Prostate gland (tissue), 2 donors: ENCODE measurements at regions of chr18 and their contacts with region 1.

Region 1: GRCh38 chr18:13268158-13269012 is 49.8 kb downstream of the LDLRAD4 start:
- DNase-seq: peak; percentile 55
- H3K4me3 ChIP-seq: no peak overlapping the region
- H3K27ac ChIP-seq: peak overlapping the region; percentile 40 to 51
- H3K4me1 ChIP-seq: peaks cover 23% of the 10 kb centered on the region
- H3K27me3 ChIP-seq: no peaks in the 10 kb centered on the region
- CTCF ChIP-seq: no peak
- POLR2A ChIP-seq: no peak

Region 2: GRCh38 chr18:12990967-12991838 is 277.2 kb before region 1 on chr18 and contains the start of gene CEP192:
- intact Hi-C with region 1: loop called (anchors 10 kb)
- DNase-seq: peak; percentile 98
- H3K4me3 ChIP-seq: peak within 1 kb of the TSS; percentile 87 to 89
- H3K27ac ChIP-seq: peak within 1 kb of the TSS; percentile 85 to 86
- H3K4me1 ChIP-seq: peaks cover 4% of the 10 kb centered on the region
- H3K27me3 ChIP-seq: no peaks in the 10 kb centered on the region
- CTCF ChIP-seq: peak in 2 of 4 experiments; percentile 15 to 39
- POLR2A ChIP-seq: peak; percentile 79
- total RNA-seq, gene CEP192: 17.2 to 37.3 TPM

Region 3: DNA sequence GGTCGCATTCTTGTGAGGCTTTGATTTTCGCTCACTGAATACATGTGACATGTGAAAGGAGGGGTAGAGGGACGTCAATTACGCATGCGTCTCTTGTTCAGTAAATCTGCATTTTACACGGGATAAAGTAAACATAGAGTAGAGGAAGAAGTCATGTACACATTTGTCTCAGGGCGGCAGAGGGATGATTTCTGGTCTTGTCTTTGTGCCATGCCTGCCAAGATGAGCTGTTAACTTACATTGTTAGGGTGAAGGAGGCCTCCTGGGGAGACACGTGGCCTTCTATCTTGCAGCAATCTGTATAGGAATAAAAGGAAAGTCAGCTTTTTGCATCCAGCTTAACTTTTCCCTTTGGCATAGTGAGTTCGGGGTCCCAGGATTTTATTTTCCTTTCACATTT is 56.5 kb after region 1 on chr18:
- intact Hi-C with region 1: no loop called
- DNase-seq: no peak
- H3K4me3 ChIP-seq: no peak overlapping the region
- H3K27ac ChIP-seq: no peak overlapping the region
- H3K4me1 ChIP-seq: no peaks in the 10 kb centered on the region
- H3K27me3 ChIP-seq: no peaks in the 10 kb centered on the region
- CTCF ChIP-seq: no peak
- POLR2A ChIP-seq: no peak

Region 4: GRCh38 chr18:13381944-13382365 is 113.6 kb after region 1 on chr18:
- intact Hi-C with region 1: loop called (anchors 10 kb)
- DNase-seq: peak; percentile 55
- H3K4me3 ChIP-seq: peak overlapping the region in 1 of 2 donors; percentile 24
- H3K27ac ChIP-seq: peak overlapping the region; percentile 47 to 74
- H3K4me1 ChIP-seq: peaks cover 12% of the 10 kb centered on the region
- H3K27me3 ChIP-seq: no peaks in the 10 kb centered on the region
- CTCF ChIP-seq: no peak
- POLR2A ChIP-seq: no peak

Region 5: DNA sequence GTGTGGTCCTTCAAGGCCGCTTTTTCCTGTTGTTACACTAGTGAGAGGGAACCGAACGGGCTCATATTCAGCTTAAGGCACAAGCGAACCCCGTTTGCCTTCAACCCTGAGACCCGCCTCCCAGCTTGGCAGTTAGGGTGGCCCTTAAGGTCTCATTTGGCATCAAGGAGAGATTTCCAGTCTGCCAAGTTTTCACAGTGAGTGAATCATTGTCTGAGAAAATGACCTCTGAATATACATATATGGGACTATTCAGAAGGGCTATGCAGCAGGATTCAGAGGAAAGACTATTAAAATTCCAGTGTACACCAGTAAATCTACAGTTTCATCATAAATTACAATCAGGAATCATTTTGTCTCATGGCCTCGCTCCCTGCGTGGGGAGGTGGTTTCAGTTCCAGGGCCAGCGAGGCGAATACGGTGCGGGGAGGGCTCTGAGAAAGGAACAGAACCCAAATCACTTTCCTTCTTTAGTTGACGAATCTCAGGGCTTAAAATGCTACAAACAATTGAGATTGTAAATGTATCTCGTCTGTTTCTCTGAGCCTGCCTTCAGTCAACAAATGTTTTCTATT is 226.6 kb after region 1 on chr18:
- intact Hi-C with region 1: loop called (anchors 10 kb)
- DNase-seq: no peak
- H3K4me3 ChIP-seq: no peak overlapping the region
- H3K27ac ChIP-seq: no peak overlapping the region
- H3K4me1 ChIP-seq: no peaks in the 10 kb centered on the region
- H3K27me3 ChIP-seq: no peaks in the 10 kb centered on the region
- CTCF ChIP-seq: no peak
- POLR2A ChIP-seq: no peak

Region 6: DNA sequence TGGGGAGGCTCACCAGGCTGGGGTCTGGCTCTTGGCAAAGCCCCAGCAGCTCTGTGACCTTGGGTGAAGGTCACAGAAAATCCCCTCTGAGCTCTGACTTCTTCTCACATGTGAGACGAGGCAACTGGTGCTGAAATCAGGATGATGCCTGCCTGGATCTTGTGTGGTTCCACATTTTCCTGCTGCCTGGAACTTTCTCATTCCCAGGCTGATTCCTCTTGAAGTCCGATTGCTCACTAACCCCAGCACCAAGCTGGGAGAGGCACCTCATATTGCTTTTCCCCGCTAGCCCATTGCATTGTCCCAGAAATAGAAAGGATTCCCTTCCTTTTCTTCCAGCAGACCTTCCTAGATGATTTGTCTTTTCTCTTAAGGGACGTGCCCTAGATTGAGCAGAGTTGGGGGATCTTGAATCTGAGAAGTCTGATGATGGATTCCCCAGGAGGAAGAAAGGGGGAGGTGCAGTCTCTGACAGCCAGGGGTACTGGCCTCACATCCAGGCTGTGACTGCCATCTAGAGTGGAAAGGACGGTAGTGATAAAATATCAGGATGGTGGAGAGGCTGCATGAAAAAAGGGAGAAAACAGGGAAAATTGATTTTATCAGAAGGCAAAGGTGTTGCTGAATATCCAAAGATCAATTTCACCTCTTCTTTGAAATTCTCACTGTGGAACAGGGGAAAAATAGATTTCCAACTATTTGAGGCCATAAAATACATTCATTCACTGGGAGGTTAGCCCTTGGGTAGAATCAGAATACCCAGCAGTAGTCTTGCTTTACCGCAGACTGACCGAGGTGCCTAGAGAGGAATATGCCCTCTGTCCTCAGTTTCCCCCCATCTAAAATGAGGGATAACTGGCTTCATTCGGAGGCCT is 361.7 kb after region 1 on chr18:
- intact Hi-C with region 1: loop called (anchors 10 kb)
- DNase-seq: peak; percentile 37
- H3K4me3 ChIP-seq: no peak overlapping the region
- H3K27ac ChIP-seq: no peak overlapping the region
- H3K4me1 ChIP-seq: no peaks in the 10 kb centered on the region
- H3K27me3 ChIP-seq: no peaks in the 10 kb centered on the region
- CTCF ChIP-seq: peak; percentile 16 to 83 (median 72)
- POLR2A ChIP-seq: no peak